Dendritic cell treated with granulocyte-macrophage colony-stimulating factor and Interleukin-4, amounts not matched to agents 40 ng/mL and 50 ng/mL, for 4 days (primary cell): ENCODE measurements at regions of chr10 and their contacts with region 1.

Region 1: DNA sequence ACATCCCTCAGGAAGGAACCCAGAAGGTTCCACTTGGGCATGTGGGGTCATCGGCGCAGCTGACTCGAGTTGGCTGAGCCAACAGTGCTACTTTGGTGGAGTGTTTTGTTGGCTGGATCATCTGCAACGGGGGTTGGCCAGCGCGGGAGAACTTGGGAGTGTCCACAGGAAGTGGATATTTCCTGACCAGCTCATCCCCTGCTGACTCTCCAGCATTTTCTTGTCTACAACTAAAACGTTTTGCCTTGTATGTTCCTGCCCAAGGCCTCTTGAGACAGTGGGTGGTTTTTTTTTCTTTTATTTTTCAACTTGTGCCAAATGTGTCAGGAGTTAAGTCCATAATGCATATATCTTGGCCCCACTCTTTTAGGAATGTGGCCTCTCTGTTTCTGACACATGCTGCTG is 208.6 kb downstream of the ZNF365 start:
- H3K4me3 Mint-ChIP-seq: peak overlapping the region; percentile 13
- H3K27ac Mint-ChIP-seq: peak overlapping the region; percentile 80
- H3K4me1 Mint-ChIP-seq: peaks cover 62% of the 10 kb centered on the region
- H3K27me3 Mint-ChIP-seq: peaks cover 2% of the 10 kb centered on the region

Region 2: GRCh38 chr10:62306663-62307062 is 276.1 kb before region 1 on chr10:
- intact Hi-C with region 1: loop called (anchors 5 kb)
- H3K4me3 Mint-ChIP-seq: no peak overlapping the region
- H3K27ac Mint-ChIP-seq: no peak overlapping the region
- H3K4me1 Mint-ChIP-seq: peaks cover 12% of the 10 kb centered on the region
- H3K27me3 Mint-ChIP-seq: peaks cover 4% of the 10 kb centered on the region